ENCODE measurements at regions of chr18 and their contacts with region 1.

Region 1: DNA sequence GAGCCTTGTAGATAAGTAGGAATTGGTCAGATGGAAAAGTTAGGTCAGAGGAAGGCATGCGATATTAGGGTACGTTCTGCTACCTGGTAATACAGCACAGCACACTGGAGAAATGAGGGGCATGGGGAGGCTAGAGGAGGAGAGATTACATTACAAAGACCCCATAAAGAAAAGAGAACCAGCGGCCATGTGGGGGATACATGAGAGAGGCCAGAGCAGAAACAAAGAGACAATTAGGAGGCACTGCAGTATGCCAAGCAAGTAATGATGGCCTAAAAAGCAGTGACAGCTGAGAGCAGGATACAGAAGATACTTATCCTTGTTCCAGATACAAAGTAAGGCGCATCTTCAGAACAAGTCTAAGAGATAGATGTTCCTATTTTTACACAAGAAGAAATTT is 40.0 kb downstream of the TXNL1 start:
- DNase-seq: no peak
- H3K4me3 ChIP-seq: no peak overlapping the region
- H3K27ac ChIP-seq: no peak overlapping the region
- H3K27me3 ChIP-seq: no peaks in the 10 kb centered on the region
- CTCF ChIP-seq: no peak

Region 2: DNA sequence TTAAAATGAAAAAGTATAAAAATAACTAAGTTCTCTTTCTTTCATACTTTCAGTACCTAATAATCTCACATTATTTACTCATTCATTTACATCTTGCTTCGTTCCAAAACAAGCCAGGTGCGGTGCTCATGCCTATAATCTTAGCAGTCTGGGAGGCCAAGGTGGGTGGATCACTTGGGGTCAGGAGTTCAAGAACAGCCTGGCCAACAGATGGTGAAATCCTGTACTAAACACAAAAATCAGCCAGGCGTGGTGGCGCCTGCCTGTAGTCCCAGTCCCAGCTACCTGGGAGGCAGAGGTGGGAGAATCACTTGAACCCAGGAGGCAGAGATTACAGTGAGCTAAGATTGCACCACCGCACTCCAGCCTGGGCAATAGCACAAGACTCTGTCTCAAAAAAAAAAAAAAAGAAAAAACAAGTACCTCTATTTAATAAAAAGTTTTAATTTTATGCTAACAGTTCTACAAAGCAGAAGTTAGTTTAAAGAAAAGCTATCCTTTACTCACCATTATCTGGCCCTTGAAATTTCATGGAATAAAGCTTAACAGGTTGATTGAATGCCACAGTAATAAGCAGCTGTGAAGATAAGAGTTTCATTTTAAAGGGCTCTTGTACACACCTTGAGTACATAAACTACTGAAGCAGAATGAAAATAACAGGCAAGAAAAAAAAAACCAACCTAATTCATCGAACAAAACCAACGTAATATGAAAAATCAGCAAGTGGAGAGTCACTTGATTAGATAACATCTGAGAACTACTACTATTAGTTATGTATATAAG is 17.5 kb after region 1 on chr18:
- CTCF ChIA-PET with region 1: interaction called, 10 read pairs
- POLR2A ChIA-PET with region 1: interaction called, 7 read pairs
- DNase-seq: no peak
- H3K4me3 ChIP-seq: no peak overlapping the region
- H3K27ac ChIP-seq: no peak overlapping the region
- H3K27me3 ChIP-seq: no peaks in the 10 kb centered on the region
- CTCF ChIP-seq: no peak